ENCODE measurements at regions of chr15 and their contacts with region 1.

Region 1: DNA sequence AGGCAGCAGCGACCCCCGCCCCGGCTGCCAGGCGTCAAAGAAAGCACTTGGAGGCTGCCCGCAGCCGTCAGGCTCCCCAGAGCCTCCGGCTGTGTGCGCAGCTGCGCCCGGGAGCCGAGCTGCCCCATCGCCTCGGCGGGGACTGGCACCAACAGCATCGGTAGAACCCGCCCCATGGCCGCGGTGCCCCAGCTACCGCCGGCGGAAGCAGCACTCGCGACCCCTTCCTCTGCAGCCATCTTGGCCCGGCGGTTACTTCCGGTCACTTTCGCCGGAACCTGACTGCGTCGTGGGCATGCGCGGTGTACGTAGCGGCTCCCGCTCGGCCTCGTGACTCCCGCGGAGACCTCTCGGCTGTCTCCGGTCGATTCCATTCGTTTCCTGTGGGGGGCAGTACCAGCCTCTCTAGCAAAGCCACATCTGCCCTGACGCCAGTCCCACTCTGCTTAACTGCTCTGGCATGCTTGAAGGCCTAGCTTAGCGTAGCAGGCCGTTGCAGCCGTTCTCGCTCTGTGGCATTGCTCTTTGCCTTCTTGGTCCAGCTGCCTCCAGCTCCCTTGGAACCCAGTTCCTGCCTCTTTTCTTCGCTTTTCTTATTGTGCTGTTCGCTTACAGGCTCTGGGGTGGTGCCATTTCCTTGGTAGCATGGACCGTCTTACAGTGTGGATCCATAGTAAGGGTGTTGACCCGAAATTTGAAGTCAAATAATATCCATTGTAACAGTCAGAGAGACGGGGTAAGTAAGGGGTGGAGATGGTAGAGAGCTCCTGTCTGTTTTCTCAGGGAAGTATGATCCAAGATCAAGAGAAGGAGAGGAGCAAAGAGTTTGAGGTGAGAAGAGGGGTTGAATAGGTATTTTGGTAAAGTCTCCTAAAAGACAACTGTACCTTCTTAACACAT is at the start of gene SPG11:
- DNase-seq: peak; percentile 96
- H3K4me3 ChIP-seq: peak within 1 kb of the TSS; percentile 91
- H3K27ac ChIP-seq: peak within 1 kb of the TSS; percentile 85
- H3K27me3 ChIP-seq: peaks cover 4% of the 10 kb centered on the region
- CTCF ChIP-seq: peak; percentile 90
- polyA plus RNA-seq, gene SPG11: 39.6 and 48.4 TPM in 2 replicates

Region 2: DNA sequence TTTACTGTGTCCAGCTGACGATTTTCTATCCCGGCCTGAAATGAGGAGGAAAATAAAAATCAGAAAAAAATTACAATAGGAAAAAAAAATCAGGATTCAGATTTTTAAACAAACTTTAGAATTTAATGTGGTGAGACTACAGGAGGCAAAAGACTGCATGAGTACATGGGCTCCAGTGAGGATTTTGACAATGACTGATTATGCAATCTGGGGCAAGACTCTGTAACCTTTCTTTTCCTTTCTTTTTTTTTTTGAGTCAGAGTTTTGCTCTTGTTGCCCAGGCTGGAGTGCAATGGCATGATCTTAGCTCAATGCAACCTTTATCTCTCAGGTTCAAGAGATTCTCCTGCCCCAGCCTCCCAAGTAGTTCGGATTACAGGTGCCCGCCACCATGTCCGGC is 30.1 kb before region 1 on chr15:
- CTCF ChIA-PET with region 1: interaction called, 4 read pairs
- POLR2A ChIA-PET with region 1: interaction called, 11 read pairs
- DNase-seq: no peak
- H3K4me3 ChIP-seq: no peak overlapping the region
- H3K27ac ChIP-seq: no peak overlapping the region
- H3K27me3 ChIP-seq: no peaks in the 10 kb centered on the region
- CTCF ChIP-seq: no peak

Region 3: DNA sequence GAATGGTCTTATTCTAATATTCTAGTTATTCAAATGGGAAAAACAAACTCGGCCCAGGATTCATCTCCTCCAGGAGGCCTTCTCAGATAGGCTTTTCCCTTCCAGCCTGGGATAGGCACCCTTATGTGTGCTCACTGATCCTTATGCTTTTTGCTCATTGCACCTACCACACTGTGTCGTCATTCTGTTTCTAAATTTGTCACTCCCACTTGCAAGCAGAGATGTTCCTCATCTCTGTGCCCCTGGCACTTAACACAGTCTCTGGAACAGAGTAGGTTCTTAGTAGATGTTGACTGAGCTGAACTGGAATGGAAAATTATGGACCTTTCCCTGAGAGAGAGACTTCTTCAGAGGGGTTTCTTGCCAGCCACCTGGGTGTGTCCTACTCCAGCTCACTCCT is 18.6 kb after region 1 on chr15:
- CTCF ChIA-PET with region 1: interaction called, 17 read pairs
- POLR2A ChIA-PET with region 1: no interaction called
- DNase-seq: no peak
- H3K4me3 ChIP-seq: no peak overlapping the region
- H3K27ac ChIP-seq: no peak overlapping the region
- H3K27me3 ChIP-seq: peaks cover 16% of the 10 kb centered on the region
- CTCF ChIP-seq: no peak

Region 4: GRCh38 chr15:44711356-44712107 is 47.9 kb after region 1 on chr15 and contains the start of gene B2M:
- CTCF ChIA-PET with region 1: interaction called, 19 read pairs
- POLR2A ChIA-PET with region 1: interaction called, 23 read pairs
- DNase-seq: peak; percentile 91
- H3K4me3 ChIP-seq: peak within 1 kb of the TSS; percentile 96
- H3K27ac ChIP-seq: peak within 1 kb of the TSS; percentile 93
- H3K27me3 ChIP-seq: no peaks in the 10 kb centered on the region
- CTCF ChIP-seq: no peak
- polyA plus RNA-seq, gene B2M: 5,193 and 5,536 TPM in 2 replicates

Region 5: GRCh38 chr15:44728576-44729407 is 65.1 kb after region 1 on chr15:
- CTCF ChIA-PET with region 1: interaction called, 180 read pairs
- POLR2A ChIA-PET with region 1: interaction called, 15 read pairs
- DNase-seq: peak; percentile 95
- H3K4me3 ChIP-seq: peak overlapping the region; percentile 83
- H3K27ac ChIP-seq: peak overlapping the region; percentile 95
- H3K27me3 ChIP-seq: no peaks in the 10 kb centered on the region
- CTCF ChIP-seq: no peak

Measured in AG04450 (cell line).